ENCODE measurements at regions of chr22 and their contacts with region 1.

Region 1: DNA sequence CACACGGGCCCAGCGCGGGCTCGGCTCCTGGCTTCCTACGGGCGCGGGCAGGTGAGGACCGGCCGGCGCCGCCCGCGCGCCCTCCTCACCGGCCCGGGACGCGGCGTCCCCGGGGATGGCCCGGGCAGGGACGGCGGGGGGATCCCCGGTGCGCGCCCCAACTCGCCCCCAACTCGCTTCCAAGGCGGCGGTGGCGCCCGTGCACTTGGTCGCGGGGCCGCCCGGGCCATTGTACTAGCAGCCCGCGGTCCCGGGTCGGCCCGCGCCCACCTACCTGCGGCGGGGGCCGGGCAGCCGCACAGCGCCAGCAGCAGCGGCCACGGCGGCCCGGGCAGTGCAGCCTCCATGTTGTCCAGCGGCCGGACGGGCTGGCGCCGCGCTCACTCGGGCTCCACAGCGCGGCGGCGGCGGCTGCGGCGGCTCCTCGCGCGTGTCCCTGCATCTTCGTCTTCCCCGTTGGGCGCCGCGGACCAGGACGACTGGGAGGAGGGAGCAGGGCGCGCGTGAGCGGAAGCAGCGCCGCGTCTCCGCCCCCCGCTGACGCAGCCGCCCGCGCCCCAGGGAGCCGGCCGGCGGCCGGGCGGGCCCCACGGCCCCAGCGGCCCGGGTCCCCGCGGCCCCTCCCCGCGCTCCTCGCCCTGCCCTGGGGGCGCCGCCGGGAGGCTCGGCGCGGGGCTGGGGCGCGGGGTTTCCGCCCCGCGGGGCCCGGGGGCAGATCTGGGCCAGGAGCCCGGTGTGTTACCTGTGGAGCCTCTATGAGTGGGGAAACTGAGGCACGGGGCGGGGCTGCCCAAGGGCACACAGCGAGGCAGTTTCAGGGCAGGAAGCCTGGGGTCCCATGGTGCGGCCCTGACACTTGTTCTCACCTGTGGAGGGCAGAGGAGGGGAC is 159.3 kb upstream of the GRK3 start:
- DNase-seq: peak; percentile 78
- ATAC-seq: peak; percentile 85
- H3K4me3 ChIP-seq: peak overlapping the region in 4 of 5 experiments; percentile 48 to 72 (median 62)
- H3K4me3 Mint-ChIP-seq: peak overlapping the region; percentile 83
- H3K27ac ChIP-seq: peak overlapping the region; percentile 53 to 75
- H3K27ac Mint-ChIP-seq: no peak overlapping the region
- H3K4me1 ChIP-seq: peaks cover 31 to 44% of the 10 kb centered on the region in 2 donors
- H3K4me1 Mint-ChIP-seq: peaks cover 39% of the 10 kb centered on the region
- H3K27me3 ChIP-seq: no peaks in the 10 kb centered on the region
- H3K27me3 Mint-ChIP-seq: no peaks in the 10 kb centered on the region
- CTCF ChIP-seq: no peak

Region 2: GRCh38 chr22:25419237-25420113 is 14.3 kb after region 1 on chr22:
- CTCF ChIA-PET with region 1: interaction called, 5 read pairs
- POLR2A ChIA-PET with region 1: interaction called, 4 read pairs
- intact Hi-C with region 1: loop called (anchors 2 kb)
- DNase-seq: peak; percentile 65
- ATAC-seq: peak; percentile 49
- H3K4me3 ChIP-seq: peak overlapping the region; percentile 19 to 68 (median 43)
- H3K4me3 Mint-ChIP-seq: peak overlapping the region; percentile 81
- H3K27ac ChIP-seq: no peak overlapping the region
- H3K27ac Mint-ChIP-seq: peak overlapping the region; percentile 12
- H3K4me1 ChIP-seq: peaks cover 38 to 40% of the 10 kb centered on the region in 2 donors
- H3K4me1 Mint-ChIP-seq: peaks cover 34% of the 10 kb centered on the region
- H3K27me3 ChIP-seq: peaks cover 0 to 45% (median 21%) of the 10 kb centered on the region in 4 experiments
- H3K27me3 Mint-ChIP-seq: peaks cover 40% of the 10 kb centered on the region
- CTCF ChIP-seq: no peak

Region 3: DNA sequence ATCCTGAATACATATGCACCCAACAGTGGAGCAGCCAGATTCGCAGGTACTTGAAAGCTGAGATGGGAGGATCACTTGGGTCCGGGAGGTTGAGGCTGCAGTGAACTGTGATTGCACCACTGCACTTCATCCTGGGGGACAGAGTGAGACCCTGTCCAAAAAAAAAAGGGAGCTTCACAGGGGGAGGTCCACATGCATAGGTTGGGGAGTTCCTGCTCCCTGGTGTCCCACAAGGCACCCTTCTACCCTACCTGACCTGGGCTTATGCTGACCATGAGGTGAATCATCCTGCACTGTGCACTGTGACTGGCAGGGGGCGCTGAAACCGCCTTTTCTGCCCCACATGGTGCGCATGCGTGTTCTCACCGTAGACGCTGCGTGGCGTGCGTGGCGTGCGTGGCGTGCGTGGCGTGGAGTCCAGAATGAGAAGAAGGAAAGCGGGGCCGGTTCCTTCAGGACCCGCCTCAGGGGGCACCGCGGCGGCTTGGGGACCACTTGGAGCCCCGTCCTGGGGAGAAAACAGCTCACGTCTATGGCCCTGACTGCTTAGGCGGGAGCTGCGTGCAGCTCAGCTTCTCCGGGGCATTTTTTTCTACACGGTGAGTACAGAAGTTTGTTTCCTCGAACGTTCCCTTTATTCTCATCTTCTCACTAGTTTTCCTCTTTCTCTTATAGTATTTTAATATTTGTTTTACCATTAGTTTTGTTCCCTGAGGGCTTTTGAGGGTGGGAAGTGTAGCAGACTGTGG is 42.7 kb after region 1 on chr22:
- CTCF ChIA-PET with region 1: interaction called, 6 read pairs
- POLR2A ChIA-PET with region 1: no interaction called
- intact Hi-C with region 1: loop called (anchors 1 kb)
- DNase-seq: peak; percentile 93
- ATAC-seq: peak; percentile 97
- H3K4me3 ChIP-seq: peak overlapping the region; percentile 72 to 95 (median 84)
- H3K4me3 Mint-ChIP-seq: peak overlapping the region; percentile 95
- H3K27ac ChIP-seq: peak overlapping the region in 1 of 2 donors; percentile 79
- H3K27ac Mint-ChIP-seq: peak overlapping the region; percentile 99
- H3K4me1 ChIP-seq: peaks cover 9 to 14% of the 10 kb centered on the region in 2 donors
- H3K4me1 Mint-ChIP-seq: peaks cover 38% of the 10 kb centered on the region
- H3K27me3 ChIP-seq: no peaks in the 10 kb centered on the region
- H3K27me3 Mint-ChIP-seq: no peaks in the 10 kb centered on the region
- CTCF ChIP-seq: peak; percentile 86